ENCODE measurements at regions of chr19 and their contacts with region 1.

Region 1: DNA sequence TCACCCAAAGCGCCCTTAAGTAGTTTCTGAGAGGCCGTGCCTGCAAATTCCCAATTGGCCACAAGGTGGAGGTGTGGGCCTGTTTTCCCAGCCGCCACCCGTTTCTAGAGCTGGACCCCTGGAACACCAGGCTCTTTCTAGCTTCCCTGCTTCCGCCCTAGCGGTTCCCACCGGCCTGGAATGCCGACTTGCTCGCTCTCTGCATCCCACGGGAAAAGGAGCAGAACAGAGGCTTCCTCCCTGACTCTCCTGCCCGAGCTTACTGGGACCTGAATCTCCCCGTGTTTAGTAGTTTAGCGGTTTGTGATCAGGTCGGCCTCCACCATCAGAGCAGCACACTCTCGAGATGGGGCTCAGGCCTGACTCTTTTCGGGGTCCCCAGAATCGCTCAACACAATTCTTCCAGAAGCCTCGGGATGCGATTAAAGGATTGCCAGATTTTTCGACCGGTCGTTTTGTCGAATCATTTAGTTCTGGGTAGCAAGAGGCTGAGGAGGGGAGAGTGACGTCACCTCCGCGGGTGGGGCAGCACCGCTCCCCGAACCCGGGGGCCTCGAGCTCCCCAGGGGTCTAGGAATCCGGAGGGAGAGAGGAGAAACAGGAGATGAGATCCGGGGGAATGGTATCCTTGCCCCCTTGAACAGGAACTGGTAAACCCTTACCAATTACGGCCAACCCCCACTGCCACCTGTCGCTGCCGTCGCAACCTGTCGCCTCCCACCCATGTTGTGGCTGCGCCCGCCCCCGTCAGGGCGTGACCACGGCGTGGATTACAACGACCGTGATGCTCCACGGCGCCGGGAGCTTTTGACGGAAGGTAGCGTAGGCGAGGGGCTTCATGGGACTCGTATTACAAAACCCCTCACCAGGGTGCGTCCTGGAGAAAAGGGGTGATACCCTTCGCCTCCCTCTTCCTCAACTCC is 8.0 kb downstream of the NAPSA start:
- DNase-seq: peak; percentile 83
- H3K4me3 Mint-ChIP-seq: peak overlapping the region; percentile 89
- H3K27ac Mint-ChIP-seq: peak overlapping the region; percentile 99
- H3K4me1 Mint-ChIP-seq: peaks cover 42% of the 10 kb centered on the region
- H3K27me3 Mint-ChIP-seq: no peaks in the 10 kb centered on the region

Region 2: DNA sequence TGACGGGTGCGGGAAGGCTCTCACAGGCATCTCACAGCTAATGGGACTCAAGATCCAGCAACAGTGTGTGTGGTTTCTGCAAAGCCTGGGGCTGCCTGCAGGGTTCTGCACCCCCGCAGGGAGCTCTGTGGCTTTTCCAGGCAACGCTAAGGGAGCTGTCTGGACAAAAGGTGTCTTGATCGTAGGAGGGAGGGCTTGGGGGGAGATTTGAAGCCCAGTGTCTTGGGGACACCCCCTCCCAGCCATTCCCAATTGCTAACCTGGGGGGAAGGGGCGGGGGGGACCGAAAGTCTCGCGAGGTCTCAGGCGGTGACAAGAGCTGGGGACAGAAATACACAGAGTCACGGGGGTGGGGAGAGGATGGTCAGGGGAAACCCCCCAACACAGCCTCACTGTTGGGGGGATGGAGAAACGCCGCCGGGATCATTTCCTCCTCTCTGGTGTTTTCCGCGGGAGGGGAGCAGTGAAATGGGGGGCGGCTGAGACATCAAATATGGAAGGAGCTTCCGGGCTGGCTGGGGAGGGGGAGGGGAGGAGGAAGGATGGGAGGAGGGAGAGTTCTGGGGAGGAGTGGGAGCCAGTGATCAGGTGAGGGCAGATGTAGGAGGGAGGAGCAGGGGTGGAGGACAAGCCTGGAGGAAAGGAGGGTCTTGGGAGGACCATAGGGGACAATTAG is 41.5 kb before region 1 on chr19:
- intact Hi-C with region 1: no loop called
- DNase-seq: no peak
- H3K4me3 Mint-ChIP-seq: peak overlapping the region; percentile 77
- H3K27ac Mint-ChIP-seq: peak overlapping the region; percentile 33
- H3K4me1 Mint-ChIP-seq: peaks cover 9% of the 10 kb centered on the region
- H3K27me3 Mint-ChIP-seq: peaks cover 32% of the 10 kb centered on the region

Region 3: DNA sequence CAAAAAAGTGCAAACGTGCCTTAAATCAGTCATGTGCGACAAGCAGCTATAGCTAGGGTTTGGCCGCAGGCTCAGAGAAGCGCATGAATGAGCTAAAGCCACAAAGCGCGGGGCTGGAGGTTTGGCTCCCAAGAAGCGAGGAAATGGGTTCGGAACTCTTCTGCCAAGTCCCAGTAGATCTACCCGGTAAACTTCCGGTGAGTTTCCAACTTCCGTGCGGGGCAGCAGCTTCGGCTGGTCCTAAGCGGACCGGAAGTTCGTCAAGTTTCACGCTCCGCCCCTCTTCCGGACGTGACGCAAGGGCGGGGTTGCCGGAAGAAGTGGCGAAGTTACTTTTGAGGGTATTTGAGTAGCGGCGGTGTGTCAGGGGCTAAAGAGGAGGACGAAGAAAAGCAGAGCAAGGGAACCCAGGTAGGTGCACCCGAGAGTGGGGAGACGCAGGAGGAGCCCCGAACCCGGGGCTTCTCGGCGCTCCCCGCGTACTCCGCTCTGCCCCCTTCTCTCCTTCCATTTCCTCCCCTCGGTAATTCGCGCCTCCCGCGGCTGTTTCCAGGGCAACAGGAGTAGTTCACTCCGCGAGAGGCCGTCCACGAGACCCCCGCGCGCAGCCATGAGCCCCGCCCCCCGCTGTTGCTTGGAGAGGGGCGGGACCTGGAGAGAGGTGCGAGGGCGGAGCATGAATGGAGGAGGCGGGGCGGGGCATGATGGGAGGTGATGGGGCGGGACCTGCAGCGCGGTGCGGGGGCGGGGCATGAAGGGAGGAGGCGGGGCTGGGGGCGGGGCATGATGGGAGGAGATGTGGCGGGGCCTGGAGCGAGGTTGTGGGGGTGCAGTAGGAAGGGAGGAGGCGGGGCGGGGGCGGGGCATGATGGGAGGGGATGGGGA is 19.0 kb after region 1 on chr19 and contains the start of gene NR1H2:
- intact Hi-C with region 1: loop called (anchors 1 kb)
- DNase-seq: peak; percentile 91
- H3K4me3 Mint-ChIP-seq: peak within 1 kb of the TSS; percentile 92
- H3K27ac Mint-ChIP-seq: peak within 1 kb of the TSS; percentile 97
- H3K4me1 Mint-ChIP-seq: peaks cover 9% of the 10 kb centered on the region
- H3K27me3 Mint-ChIP-seq: no peaks in the 10 kb centered on the region
- total RNA-seq, gene NR1H2: 76.1 and 79.9 TPM in 2 replicates

Region 4: DNA sequence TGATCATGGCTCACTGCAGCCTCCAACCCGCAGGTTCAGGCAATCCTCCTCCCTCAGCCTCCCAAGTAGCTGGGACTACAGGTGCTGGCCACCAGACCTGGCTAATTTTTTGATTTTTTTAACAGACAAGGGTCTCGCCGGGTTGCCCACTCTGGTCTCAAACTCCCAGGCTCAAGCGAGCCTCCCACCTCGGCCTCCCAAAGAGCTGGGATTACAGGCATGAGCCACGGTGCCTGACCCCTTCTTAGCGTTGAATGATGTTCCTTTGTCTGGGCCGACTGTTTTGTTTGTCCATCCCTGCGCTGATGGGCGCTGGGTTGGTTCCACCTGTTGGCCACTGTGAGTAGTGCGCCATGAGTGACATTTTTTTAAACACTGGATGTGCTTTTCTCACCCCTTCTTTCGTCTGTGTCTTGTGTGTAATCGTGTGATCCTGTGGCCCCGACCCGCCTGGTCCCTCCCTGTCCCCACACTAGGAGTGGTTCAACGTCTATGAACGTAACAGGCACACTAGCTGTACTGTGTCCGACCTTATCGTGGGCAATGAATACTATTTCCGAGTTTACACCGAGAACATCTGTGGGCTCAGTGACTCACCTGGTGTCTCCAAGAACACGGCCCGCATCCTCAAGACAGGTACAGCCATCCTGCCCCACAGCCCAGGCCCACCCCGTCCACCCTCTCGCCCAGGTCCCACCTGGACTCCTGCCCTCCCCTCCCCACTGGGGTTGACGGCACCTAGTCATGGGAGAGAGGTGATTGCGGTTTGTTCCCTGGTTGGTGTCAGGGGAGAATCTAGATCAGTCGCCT is 103.8 kb after region 1 on chr19:
- intact Hi-C with region 1: loop called (anchors 1 kb)
- DNase-seq: peak; percentile 57
- H3K4me3 Mint-ChIP-seq: no peak overlapping the region
- H3K27ac Mint-ChIP-seq: no peak overlapping the region
- H3K4me1 Mint-ChIP-seq: peaks cover 12% of the 10 kb centered on the region
- H3K27me3 Mint-ChIP-seq: peaks cover 4% of the 10 kb centered on the region

Region 5: DNA sequence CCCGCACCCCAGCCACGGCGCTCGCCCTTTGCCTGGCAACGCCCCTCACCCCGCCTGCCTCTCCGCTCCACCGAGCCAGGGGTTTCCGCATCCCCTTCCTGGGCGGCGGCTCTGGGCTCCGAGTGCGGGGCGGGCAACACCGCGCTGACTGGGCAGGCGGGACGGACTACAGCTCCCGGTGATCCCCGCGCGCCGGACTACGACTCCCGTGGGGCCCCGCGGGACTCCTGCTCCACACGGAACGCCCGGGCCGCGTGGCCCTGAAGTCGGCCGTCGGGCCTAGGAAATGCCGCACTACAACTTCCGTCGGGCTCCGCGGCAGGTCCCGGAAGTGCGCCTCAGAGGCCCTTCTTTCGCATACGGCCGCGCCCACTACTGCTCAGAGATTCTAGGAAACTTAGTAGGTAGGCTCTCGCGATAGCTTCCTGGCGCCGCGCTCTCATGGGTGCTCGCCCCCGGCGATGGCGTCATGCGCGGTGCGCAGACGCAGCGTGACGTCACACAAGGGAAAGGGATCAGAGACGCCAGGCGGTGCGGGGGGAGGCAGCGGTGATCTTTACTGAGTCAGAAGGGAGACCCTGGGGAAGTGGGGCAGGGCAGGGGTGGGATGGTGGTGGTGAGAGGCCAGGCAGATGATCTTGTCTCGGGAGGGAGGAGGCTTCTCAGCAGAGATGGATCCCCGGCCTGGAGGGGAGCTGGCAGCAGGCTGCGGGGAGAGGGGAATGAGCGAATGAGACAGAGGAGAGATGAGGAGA is 153.8 kb after region 1 on chr19 and contains the start of gene JOSD2:
- intact Hi-C with region 1: loop called (anchors 1 kb)
- DNase-seq: peak; percentile 97
- H3K4me3 Mint-ChIP-seq: peak within 1 kb of the TSS; percentile 90
- H3K27ac Mint-ChIP-seq: peak within 1 kb of the TSS; percentile 97
- H3K4me1 Mint-ChIP-seq: peaks cover 9% of the 10 kb centered on the region
- H3K27me3 Mint-ChIP-seq: no peaks in the 10 kb centered on the region
- total RNA-seq, gene JOSD2: 39.9 and 43.6 TPM in 2 replicates

Measured in activated T-helper 2 cell treated with anti-CD3 and anti-CD28 coated beads, Interferon-gamma antibody, Interleukin-2, Interleukin-4, amounts not matched to agents 10 μg/mL and 5 μg/mL and 100 μg/mL, durations not matched to agents 14 hours and 24 hours and 36 hours (primary cell).